Aorta (tissue), 5 donors: ENCODE measurements at regions of chrX and their contacts with region 1.

Region 1: DNA sequence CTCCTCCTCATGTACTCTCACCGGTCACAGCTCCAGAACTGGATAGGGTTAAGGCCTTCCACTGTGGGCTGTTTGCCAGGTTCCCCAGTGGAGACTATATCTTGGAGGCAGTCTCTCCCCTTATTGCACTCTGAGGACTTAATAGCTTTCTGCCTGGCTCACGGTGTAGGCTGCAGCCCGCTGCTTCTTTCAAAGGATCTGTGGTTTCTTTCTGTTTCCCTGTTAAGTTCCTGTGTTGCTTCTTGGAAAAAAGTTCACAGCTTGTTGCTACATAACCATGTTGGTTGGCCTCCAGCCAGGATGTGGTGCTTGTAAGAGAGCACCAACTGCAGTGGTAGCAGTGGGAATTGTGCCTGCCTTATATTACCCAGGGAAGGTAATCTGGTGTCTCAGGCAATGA is 24.9 kb upstream of the ZDHHC15 start:
- DNase-seq: peak; percentile 82
- ATAC-seq: peak; percentile 52
- H3K4me3 ChIP-seq: no peak overlapping the region
- H3K27ac ChIP-seq: no peak overlapping the region
- H3K4me1 ChIP-seq: peaks cover 0 to 1% of the 10 kb centered on the region in 2 donors
- H3K27me3 ChIP-seq: no peaks in the 10 kb centered on the region

Region 2: DNA sequence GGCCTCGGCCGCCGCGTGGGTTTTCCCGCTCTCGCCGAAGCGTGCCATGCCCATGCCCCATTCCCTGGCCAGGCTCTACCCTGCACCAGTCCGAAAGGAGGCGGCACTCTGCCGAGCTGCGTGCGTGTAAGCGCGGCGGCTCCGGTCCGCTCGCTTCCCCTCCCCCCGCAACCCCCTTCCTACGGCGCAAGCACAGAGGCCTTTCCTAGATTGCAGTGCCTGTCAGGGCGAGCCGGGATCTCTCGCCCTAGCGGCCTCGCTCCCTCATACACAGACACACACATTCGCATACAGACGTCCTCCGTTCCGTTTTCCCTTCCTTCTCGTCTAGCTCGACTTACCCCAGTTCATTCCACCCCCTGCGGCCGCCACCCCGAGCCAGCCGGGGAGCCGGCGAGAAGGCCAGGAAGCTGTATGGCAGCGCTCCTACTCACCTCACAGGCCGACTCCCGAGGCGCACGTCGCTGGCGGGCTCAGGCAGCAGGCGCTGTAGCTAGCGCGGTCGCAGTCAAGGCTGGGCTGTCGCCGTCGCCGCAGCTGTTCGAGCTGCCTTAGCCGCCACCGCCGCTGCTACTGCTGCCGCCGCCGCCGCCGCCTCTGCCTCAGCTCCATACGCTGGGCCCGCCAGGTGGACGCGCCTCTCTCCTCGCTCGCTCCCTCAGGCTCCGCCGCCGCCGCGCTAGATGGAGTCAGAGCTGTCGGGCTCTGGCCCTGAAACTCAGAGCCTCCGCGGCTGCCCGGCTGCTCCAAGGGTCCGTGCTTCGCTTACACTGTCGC is 623.1 kb before region 1 on chrX:
- intact Hi-C with region 1: loop called in 1 of 2 experiments (anchors 10 kb)
- DNase-seq: peak; percentile 65 to 86
- ATAC-seq: peak; percentile 82
- H3K4me3 ChIP-seq: peak overlapping the region; percentile 3 to 43
- H3K27ac ChIP-seq: peak overlapping the region in 1 of 2 donors; percentile 13
- H3K4me1 ChIP-seq: peaks cover 0 to 1% of the 10 kb centered on the region in 2 donors
- H3K27me3 ChIP-seq: no peaks in the 10 kb centered on the region

Region 3: DNA sequence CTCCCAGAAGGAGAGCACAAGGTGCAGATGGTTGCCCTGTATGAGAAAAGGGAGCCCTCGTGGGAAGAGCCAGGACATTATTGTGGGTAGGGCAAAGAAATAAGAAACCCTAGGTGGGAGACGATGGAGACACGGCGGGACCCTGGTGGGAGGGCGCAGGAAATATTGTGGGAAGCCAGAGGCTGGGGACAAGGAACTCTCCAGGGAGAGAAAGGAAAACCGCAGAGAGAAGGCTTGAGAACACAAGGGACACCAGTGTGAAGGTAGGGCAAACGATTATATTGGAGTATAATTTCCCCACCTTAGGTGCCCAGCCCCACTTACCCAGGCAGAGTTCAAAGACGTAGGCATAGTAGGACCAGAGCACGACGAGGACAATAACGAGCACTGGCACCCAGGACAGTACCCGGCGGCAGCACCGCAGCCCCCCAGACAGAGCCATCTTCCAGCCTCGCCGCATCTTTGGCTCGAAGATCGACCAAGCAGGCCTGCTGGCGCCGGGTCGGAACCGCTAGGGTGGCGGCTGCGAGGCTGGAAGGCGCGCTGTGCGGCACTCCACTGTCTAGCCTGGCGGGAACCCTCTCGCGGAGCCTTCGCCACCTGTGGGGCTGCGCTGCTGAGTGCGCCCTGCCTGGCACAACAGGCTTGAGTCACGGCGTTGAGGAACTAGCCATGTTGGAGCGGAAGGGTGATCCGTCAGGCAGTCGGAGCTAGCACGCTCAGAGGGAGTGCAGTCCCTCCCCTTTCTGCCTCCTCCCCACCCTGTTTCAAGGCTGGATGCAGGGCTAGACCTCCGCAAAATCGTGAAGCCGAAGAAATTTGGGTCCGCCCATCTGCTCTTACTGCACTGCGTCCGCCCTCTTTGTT is 25.0 kb before region 1 on chrX and contains the start of gene ZDHHC15:
- intact Hi-C with region 1: no loop called
- DNase-seq: peak; percentile 75 to 88
- ATAC-seq: peak; percentile 90
- H3K4me3 ChIP-seq: peak within 1 kb of the TSS; percentile 55 to 82
- H3K27ac ChIP-seq: peak within 1 kb of the TSS; percentile 14 to 75
- H3K4me1 ChIP-seq: no peaks in the 10 kb centered on the region
- H3K27me3 ChIP-seq: no peaks in the 10 kb centered on the region
- total RNA-seq, gene ZDHHC15: 3.1 to 4.8 TPM

Region 4: DNA sequence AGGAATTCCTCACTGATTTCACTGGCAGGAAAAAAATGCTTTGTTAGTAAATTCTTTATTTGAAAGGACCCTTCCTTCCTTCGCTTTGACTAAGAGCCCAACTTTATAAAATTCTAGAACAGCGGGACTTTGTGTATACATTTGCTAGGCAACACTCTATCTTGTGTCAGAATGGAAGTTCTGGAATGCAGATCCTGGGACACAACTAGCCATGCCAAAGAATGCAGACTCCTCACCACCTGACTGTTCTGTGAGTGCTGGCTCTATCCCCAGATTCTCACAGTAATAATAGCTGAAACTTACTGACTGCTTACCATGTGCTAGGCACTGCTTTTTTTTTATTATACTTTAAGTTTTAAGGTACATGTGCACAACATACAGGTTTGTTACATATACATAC is 48.4 kb after region 1 on chrX:
- intact Hi-C with region 1: loop called in 1 of 2 experiments (anchors 10 kb)
- DNase-seq: no peak
- ATAC-seq: peak; percentile 56
- H3K4me3 ChIP-seq: no peak overlapping the region
- H3K27ac ChIP-seq: no peak overlapping the region
- H3K4me1 ChIP-seq: no peaks in the 10 kb centered on the region
- H3K27me3 ChIP-seq: no peaks in the 10 kb centered on the region

Region 5: DNA sequence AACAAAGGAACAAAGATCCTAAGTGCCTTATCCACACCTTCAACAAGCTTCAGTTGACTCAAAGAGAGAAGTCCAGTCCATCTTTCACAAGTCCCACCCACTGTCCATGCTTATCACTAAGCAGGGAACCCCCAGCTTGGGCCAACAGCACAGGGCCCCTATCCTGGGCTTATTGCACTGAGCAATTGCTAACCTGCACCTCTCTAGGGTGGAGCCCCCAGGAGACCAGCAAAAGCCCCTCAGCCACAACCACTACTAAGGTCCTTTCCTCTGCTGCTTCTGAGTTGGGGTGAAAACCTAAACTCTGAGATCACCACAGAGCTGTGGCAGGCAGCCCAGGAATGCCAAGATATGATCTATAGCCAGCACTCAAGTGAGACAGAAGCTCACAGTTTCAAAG is 528.3 kb after region 1 on chrX:
- intact Hi-C with region 1: no loop called
- DNase-seq: no peak
- ATAC-seq: no peak
- H3K4me3 ChIP-seq: no peak overlapping the region
- H3K27ac ChIP-seq: no peak overlapping the region
- H3K4me1 ChIP-seq: no peaks in the 10 kb centered on the region
- H3K27me3 ChIP-seq: no peaks in the 10 kb centered on the region